A673 (cell line): ENCODE measurements at regions of chr17 and their contacts with region 1.

Region 1: GRCh38 chr17:66727639-66728570 is 107.0 kb upstream of the CACNG5 start:
- DNase-seq: peak; percentile 80
- H3K4me3 ChIP-seq: no peak overlapping the region
- H3K27ac ChIP-seq: no peak overlapping the region
- H3K4me1 ChIP-seq: no peaks in the 10 kb centered on the region
- H3K27me3 ChIP-seq: no peaks in the 10 kb centered on the region
- CTCF ChIP-seq: peak; percentile 90

Region 2: DNA sequence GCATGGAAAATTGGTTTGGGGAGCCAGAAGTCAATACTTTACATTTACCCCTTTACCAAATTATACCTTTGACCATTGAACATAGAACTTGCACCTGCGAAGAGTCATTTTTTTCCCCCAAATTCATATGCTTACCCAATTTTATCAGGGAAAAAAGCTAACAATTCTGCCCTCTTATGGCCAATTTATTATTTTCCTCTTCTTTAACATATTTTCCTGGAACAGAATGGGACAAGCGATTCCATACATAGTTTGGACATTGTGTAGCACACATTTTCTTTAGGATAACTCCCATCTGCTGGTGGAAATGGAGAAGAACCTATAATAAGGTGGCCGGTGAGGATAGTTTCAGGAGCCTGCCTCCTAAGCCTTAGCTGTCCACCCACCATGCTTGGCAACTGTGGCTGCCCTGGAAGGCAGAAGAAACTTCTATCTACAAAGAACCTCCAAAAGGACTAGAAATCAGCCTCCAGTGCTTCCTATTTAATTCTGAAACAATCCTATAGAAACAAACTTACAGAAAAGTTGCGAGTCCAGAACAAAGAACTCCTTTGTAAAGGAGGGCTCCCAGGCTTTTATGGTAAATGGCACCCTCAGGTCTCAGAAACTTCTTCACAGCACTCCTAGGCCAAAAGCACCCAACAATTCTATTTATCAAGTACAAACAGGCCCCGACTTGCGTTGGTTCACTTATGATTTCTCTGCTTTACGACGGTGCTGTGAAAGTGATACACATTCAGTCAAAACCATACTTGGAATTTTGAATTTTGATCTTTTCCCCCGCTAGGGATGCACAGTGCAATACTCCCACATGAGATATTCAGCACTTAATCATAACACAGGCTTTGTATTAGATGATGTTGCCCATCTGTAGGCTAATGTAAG is 172.5 kb after region 1 on chr17:
- CTCF ChIA-PET with region 1: interaction called, 14 read pairs
- POLR2A ChIA-PET with region 1: no interaction called
- intact Hi-C with region 1: loop called (anchors 1 kb)
- DNase-seq: peak; percentile 38
- H3K4me3 ChIP-seq: no peak overlapping the region
- H3K27ac ChIP-seq: no peak overlapping the region
- H3K4me1 ChIP-seq: peaks cover 6% of the 10 kb centered on the region
- H3K27me3 ChIP-seq: no peaks in the 10 kb centered on the region
- CTCF ChIP-seq: peak; percentile 62

Region 3: GRCh38 chr17:66975604-66976384 is 247.9 kb after region 1 on chr17:
- CTCF ChIA-PET with region 1: no interaction called
- POLR2A ChIA-PET with region 1: no interaction called
- intact Hi-C with region 1: loop called (anchors 10 kb)
- DNase-seq: peak; percentile 48
- H3K4me3 ChIP-seq: no peak overlapping the region
- H3K27ac ChIP-seq: no peak overlapping the region
- H3K4me1 ChIP-seq: no peaks in the 10 kb centered on the region
- H3K27me3 ChIP-seq: no peaks in the 10 kb centered on the region
- CTCF ChIP-seq: peak; percentile 51

Region 4: GRCh38 chr17:67157732-67158639 is 430.1 kb after region 1 on chr17:
- CTCF ChIA-PET with region 1: interaction called, 9 read pairs
- POLR2A ChIA-PET with region 1: interaction called, 3 read pairs
- intact Hi-C with region 1: loop called (anchors 5 kb)
- DNase-seq: peak; percentile 84
- H3K4me3 ChIP-seq: no peak overlapping the region
- H3K27ac ChIP-seq: no peak overlapping the region
- H3K4me1 ChIP-seq: peaks cover 4% of the 10 kb centered on the region
- H3K27me3 ChIP-seq: no peaks in the 10 kb centered on the region
- CTCF ChIP-seq: peak; percentile 66